ENCODE measurements at regions of chr3 and their contacts with region 1.

Region 1: DNA sequence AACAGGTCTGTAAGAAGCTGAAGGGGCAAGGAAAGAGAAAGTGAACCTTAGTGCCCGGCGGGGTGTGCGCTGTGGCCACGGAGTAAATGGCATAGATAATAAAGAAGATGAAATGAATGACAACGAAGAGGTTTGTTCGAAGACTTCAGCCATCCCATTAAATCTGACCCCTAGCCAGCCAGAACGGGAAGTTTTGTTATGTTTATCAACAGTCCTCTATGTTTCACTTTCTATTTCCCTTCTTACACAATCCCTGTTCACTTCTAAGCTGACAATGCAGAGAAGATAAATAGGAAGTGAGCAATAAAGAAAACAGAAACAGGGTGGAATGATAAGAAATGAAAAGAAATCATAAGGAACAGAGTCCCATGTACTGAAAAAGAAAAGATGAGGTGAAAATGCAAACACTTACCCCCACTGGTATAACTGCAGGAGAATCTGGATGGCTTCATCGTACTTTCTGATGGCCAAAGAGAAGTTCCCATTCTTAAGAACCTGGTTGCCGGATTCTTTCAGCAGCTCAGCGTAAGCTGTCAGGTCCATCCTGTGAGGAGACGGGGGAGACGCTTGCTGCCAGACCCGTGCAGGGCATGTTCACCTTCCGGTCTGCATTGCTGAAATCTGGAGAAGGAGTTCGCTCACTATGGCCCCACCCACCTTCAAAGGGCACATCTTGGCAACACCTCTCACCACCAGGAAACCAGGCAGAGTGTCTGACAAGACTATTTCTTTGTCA is 36.8 kb downstream of the TRANK1 start:
- H3K4me3 Mint-ChIP-seq: peak overlapping the region; percentile 75
- H3K27ac Mint-ChIP-seq: peak overlapping the region; percentile 94
- H3K4me1 Mint-ChIP-seq: peaks cover 48% of the 10 kb centered on the region
- H3K27me3 Mint-ChIP-seq: no peaks in the 10 kb centered on the region

Region 2: GRCh38 chr3:36957862-36958686 is 50.0 kb after region 1 on chr3:
- intact Hi-C with region 1: loop called (anchors 1 kb)
- H3K4me3 Mint-ChIP-seq: no peak overlapping the region
- H3K27ac Mint-ChIP-seq: no peak overlapping the region
- H3K4me1 Mint-ChIP-seq: peaks cover 15% of the 10 kb centered on the region
- H3K27me3 Mint-ChIP-seq: no peaks in the 10 kb centered on the region

Region 3: DNA sequence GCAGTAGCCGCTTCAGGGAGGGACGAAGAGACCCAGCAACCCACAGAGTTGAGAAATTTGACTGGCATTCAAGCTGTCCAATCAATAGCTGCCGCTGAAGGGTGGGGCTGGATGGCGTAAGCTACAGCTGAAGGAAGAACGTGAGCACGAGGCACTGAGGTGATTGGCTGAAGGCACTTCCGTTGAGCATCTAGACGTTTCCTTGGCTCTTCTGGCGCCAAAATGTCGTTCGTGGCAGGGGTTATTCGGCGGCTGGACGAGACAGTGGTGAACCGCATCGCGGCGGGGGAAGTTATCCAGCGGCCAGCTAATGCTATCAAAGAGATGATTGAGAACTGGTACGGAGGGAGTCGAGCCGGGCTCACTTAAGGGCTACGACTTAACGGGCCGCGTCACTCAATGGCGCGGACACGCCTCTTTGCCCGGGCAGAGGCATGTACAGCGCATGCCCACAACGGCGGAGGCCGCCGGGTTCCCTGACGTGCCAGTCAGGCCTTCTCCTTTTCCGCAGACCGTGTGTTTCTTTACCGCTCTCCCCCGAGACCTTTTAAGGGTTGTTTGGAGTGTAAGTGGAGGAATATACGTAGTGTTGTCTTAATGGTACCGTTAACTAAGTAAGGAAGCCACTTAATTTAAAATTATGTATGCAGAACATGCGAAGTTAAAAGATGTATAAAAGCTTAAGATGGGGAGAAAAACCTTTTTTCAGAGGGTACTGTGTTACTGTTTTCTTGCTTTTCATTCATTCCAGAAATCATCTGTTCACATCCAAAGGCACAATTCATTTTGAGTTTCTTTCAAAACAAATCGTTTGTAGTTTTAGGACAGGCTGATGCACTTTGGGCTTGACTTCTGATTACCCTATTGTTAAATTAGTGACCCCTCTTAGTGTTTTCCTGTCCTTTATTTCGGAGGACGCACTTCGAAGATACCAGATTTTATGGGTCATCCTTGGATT is 85.5 kb after region 1 on chr3 and contains the start of gene MLH1:
- intact Hi-C with region 1: loop called (anchors 1 kb)
- H3K4me3 Mint-ChIP-seq: no peak within 1 kb of the TSS
- H3K27ac Mint-ChIP-seq: no peak within 1 kb of the TSS
- H3K4me1 Mint-ChIP-seq: peaks cover 16% of the 10 kb centered on the region
- H3K27me3 Mint-ChIP-seq: no peaks in the 10 kb centered on the region

Region 4: DNA sequence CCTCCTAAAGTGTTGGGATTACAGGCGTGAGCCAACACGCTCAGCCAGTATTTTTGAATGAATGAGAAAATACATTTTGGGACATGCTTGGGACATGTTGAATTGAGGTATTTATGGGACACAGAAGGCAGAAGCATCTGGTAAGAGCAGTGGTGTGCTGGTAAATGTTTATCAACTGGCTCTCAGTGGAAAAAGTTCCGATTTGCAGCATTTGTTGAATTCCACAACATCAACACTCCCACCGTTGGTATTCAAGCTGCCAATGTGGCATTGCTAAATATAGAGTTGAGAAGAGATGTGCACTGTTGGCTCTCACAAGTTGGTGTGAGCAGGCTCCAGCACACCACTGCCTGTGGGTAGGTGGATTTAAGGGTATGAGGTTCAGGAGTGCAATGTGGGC is 302.2 kb after region 1 on chr3:
- intact Hi-C with region 1: loop called (anchors 1 kb)
- H3K4me3 Mint-ChIP-seq: no peak overlapping the region
- H3K27ac Mint-ChIP-seq: no peak overlapping the region
- H3K4me1 Mint-ChIP-seq: no peaks in the 10 kb centered on the region
- H3K27me3 Mint-ChIP-seq: no peaks in the 10 kb centered on the region

Measured in dendritic cell treated with granulocyte-macrophage colony-stimulating factor and Interleukin-4, amounts not matched to agents 40 ng/mL and 50 ng/mL, for 4 days (primary cell).